ENCODE measurements at regions of chr13 and their contacts with region 1.

Region 1: DNA sequence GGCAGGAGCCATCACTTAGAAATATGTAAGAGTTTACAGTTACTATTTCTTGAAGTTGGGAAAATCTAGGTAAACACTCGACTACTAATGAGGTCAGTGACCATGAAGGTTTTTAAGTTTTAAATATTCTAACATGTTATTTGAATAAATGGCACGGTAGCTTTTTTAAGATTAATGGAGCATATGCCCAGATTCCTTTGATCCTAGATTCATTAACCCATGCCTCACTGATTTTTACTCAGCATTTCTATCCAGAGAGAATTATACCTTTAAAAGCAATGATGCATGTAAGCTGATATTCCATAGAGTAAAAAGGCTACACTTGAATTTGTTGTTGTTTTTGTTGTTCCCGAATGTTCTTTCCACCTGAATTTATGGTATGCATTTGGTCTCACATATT is 541.4 kb downstream of the DACH1 start:
- DNase-seq: no peak
- ATAC-seq: no peak
- H3K4me3 ChIP-seq: no peak overlapping the region
- H3K27ac ChIP-seq: no peak overlapping the region
- H3K4me1 ChIP-seq: no peaks in the 10 kb centered on the region
- H3K27me3 ChIP-seq: no peaks in the 10 kb centered on the region
- CTCF ChIP-seq: no peak

Region 2: GRCh38 chr13:71290963-71291841 is 34.4 kb before region 1 on chr13:
- intact Hi-C with region 1: loop called in 1 of 10 experiments (anchors 2 kb)
- DNase-seq: peak in 1 of 2 donors; percentile 55
- ATAC-seq: peak in 6 of 8 donors; percentile 42 to 74 (median 69)
- H3K4me3 ChIP-seq: peak overlapping the region; percentile 10 to 58 (median 50)
- H3K27ac ChIP-seq: peak overlapping the region; percentile 11 to 80 (median 58)
- H3K4me1 ChIP-seq: peaks cover 0 to 11% (median 3%) of the 10 kb centered on the region in 9 donors
- H3K27me3 ChIP-seq: no peaks in the 10 kb centered on the region
- CTCF ChIP-seq: no peak

Measured in heart right ventricle (tissue), 16 donors.